Transverse colon (tissue), 4 donors: ENCODE measurements at regions of chr2 and their contacts with region 1.

Region 1: DNA sequence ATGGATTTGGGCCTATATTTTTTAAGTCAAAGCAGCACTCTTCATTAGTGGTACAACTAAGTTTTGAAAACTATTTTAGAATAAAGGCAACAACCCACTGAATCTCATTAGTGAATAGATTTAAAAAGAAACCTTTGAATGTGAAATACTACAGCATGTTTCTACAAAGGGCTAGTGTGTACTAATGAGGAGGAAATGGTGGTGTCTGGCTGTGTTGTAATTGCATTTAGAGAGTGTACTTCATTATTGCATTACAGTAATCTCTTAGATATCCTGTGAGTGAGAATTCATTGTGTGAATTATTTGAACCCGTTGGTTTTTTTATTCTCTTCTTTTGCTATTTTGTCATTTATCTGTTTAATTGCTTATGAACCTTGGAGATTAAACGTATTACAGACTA is 575.4 kb upstream of the FAM98A start:
- DNase-seq: no peak
- H3K4me3 ChIP-seq: no peak overlapping the region
- H3K27ac ChIP-seq: no peak overlapping the region
- H3K4me1 ChIP-seq: no peaks in the 10 kb centered on the region
- H3K27me3 ChIP-seq: no peaks in the 10 kb centered on the region
- CTCF ChIP-seq: no peak
- EP300 ChIP-seq: no peak
- POLR2A ChIP-seq: no peak

Region 2: GRCh38 chr2:34188464-34189303 is 14.2 kb after region 1 on chr2:
- in situ Hi-C with region 1: no loop called
- intact Hi-C with region 1: loop called (anchors 2 kb)
- DNase-seq: no peak
- H3K4me3 ChIP-seq: no peak overlapping the region
- H3K27ac ChIP-seq: no peak overlapping the region
- H3K4me1 ChIP-seq: no peaks in the 10 kb centered on the region
- H3K27me3 ChIP-seq: no peaks in the 10 kb centered on the region
- CTCF ChIP-seq: no peak
- EP300 ChIP-seq: no peak
- POLR2A ChIP-seq: no peak

Region 3: GRCh38 chr2:34254272-34254878 is 79.9 kb after region 1 on chr2:
- in situ Hi-C with region 1: no loop called
- intact Hi-C with region 1: no loop called
- DNase-seq: no peak
- H3K4me3 ChIP-seq: no peak overlapping the region
- H3K27ac ChIP-seq: peak overlapping the region in 3 of 4 donors; percentile 23 to 40 (median 24)
- H3K4me1 ChIP-seq: peaks cover 0 to 20% (median 9%) of the 10 kb centered on the region in 4 donors
- H3K27me3 ChIP-seq: no peaks in the 10 kb centered on the region
- CTCF ChIP-seq: no peak
- EP300 ChIP-seq: no peak
- POLR2A ChIP-seq: no peak

Region 4: GRCh38 chr2:34578641-34579040 is 404.1 kb after region 1 on chr2:
- in situ Hi-C with region 1: no loop called
- intact Hi-C with region 1: no loop called
- DNase-seq: no peak
- H3K4me3 ChIP-seq: no peak overlapping the region
- H3K27ac ChIP-seq: no peak overlapping the region
- H3K4me1 ChIP-seq: no peaks in the 10 kb centered on the region
- H3K27me3 ChIP-seq: no peaks in the 10 kb centered on the region
- CTCF ChIP-seq: no peak
- EP300 ChIP-seq: no peak
- POLR2A ChIP-seq: no peak